Dendritic cell treated with granulocyte-macrophage colony-stimulating factor and Interleukin-4, amounts not matched to agents 40 ng/mL and 50 ng/mL, for 4 days (primary cell): ENCODE measurements at regions of chr6 and their contacts with region 1.

Region 1: GRCh38 chr6:31546962-31547726 is at the start of gene NFKBIL1:
- H3K4me3 Mint-ChIP-seq: peak within 1 kb of the TSS; percentile 77
- H3K27ac Mint-ChIP-seq: peak within 1 kb of the TSS; percentile 80
- H3K4me1 Mint-ChIP-seq: peaks cover 34% of the 10 kb centered on the region
- H3K27me3 Mint-ChIP-seq: no peaks in the 10 kb centered on the region

Region 2: DNA sequence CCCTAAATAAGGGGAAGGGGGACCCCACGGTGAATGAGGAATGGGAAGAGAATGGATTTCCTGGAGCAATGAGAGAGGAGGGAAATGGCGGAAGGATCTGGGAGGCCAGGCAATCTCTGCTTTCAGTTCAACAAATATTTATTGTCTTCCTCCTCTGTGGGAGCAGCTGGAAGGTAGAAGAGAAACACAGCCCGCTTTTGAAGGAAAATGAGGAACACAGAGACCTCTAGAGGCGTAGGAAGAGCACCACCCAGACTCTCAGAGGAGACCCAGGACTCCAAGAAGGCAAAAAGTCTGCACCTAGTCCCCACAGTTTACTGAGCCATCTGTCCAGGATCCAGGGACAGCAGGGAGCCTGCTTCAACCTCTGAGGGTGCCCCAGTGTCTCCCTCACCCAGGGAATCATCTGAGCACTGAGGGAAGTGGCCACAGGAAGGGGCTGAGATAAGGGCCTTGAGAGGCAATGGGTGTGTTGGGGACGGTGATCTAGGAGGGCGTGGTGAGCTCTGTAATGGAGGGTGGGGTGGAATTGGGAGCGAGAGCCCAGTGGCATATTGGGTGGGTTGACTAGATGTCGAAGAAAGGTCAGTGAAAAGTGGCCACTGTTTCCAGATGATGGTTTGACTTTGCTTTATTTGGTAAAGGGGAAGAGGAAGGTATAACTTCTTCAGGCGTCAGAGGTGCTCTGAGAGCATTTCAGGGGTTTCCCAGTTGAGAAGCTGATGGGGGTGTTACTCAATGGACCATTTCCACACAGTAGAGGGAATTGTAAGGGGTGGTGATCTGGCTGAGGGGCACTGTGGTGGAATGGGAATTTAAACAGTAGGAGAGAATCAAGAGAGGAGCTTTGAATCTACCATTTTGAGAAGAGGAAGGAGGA is 431.9 kb before region 1 on chr6:
- intact Hi-C with region 1: no loop called
- H3K4me3 Mint-ChIP-seq: peak overlapping the region; percentile 0
- H3K27ac Mint-ChIP-seq: peak overlapping the region; percentile 71
- H3K4me1 Mint-ChIP-seq: peaks cover 58% of the 10 kb centered on the region
- H3K27me3 Mint-ChIP-seq: peaks cover 45% of the 10 kb centered on the region

Region 3: DNA sequence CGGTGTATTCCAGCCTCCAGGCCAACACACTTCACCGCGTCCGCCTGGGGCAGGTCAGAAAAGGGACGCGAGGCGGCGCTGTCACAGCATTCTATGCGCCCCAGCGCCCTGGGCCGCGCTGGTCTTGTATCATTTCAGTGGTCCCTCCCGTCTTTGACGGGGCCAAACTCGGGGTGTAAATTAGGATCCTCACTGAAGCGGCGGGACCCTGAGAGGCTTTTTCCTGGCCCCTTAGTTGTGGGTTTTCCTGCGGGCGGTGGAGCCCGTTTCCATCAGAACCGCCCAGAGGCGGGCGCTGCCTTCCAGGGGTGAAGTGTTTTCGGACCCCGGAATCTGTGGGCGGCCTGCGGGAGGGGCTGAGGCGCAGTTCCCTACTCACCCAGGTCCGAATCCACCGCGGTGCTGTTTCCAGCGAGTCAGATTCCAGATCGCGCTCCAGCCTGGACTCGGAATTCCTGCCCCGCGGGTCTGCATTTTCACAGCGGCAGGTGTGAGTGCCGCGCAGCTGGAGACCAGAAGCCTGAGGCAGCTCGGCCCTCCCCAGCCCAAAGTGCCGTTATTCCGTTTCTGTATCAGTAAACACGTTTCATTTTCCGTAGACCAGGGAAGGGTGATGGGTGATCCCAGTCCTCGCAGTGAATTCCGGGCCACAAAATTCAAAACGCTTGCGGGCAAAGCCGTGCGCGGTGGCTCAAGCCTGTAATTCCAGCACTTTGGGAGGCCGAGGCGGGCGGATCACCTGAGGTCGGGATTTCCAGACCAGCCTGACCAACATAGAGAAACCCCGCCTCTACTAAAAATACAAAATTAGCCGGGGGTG is 53.1 kb before region 1 on chr6:
- intact Hi-C with region 1: loop called (anchors 2 kb)
- H3K4me3 Mint-ChIP-seq: peak overlapping the region; percentile 90
- H3K27ac Mint-ChIP-seq: peak overlapping the region; percentile 95
- H3K4me1 Mint-ChIP-seq: peaks cover 46% of the 10 kb centered on the region
- H3K27me3 Mint-ChIP-seq: no peaks in the 10 kb centered on the region